ENCODE measurements at regions of chr10 and their contacts with region 1.

Region 1: DNA sequence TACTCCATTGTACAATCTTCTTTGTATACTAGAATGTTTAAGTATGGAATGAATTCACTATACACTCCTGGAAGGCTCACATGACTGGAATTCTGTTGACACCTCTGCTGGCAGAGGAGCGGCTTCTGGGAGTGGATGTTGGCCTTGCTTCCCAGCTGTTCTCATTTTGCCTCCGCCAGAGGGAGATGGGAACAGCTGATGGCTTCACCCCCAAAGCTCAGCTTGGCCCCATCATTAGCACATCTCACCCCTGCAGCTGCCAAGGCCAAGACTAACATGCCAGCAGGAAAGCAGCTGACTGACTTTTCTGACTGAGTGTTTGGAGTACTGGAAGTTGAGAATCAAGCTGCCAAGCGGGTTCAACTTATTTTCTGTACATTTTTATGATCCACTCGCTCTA is 15.1 kb downstream of the ADAM12 start:
- DNase-seq: no peak
- H3K4me3 ChIP-seq: no peak overlapping the region
- H3K27ac ChIP-seq: no peak overlapping the region
- H3K4me1 ChIP-seq: peaks cover 20% of the 10 kb centered on the region
- H3K27me3 ChIP-seq: no peaks in the 10 kb centered on the region
- CTCF ChIP-seq: no peak

Region 2: DNA sequence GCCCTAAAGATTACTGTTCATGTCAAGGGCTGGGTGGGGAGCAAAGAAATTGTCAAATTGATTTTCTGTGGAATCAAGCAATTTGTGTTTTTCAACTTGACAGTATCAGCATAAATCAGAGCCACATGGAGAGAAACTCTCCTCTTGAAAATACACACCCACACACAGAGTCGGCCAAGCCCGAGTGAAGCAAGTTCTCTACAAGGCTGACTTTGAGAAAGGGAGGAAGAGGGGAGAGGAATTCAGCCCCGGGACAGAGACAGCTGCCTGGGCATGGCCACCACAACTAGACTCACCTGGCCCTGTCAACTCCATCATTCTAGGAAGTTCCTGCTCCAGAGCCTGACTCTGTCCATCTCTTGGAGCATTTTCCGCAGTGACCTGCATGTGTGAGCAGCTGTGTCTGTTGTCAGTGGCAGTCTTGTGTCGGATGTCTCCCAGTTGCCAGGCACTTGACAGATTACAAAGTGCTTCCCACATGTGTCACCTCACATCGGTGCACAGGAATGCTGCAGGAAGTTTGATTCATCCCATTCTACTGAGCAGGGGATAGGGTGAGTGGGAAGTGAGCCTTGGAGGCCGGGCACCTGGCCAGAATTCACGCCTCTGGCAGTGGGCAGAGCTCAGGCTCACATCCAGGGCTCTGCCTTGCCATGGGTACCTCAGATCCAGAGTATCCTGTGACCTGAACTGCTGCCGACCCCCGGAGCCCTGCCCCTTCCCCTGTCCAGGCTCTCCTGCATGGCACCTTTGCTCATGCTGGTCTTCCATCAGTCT is 22.7 kb before region 1 on chr10:
- CTCF ChIA-PET with region 1: no interaction called
- POLR2A ChIA-PET with region 1: no interaction called
- intact Hi-C with region 1: loop called (anchors 1 kb)
- DNase-seq: peak; percentile 82 to 88
- H3K4me3 ChIP-seq: no peak overlapping the region
- H3K27ac ChIP-seq: no peak overlapping the region
- H3K4me1 ChIP-seq: peaks cover 13% of the 10 kb centered on the region
- H3K27me3 ChIP-seq: no peaks in the 10 kb centered on the region
- CTCF ChIP-seq: no peak